Prostate gland (tissue), 2 donors: ENCODE measurements at regions of chr4 and their contacts with region 1.

Region 1: GRCh38 chr4:119628308-119629141 is at the start of gene PDE5A:
- DNase-seq: peak; percentile 82
- H3K4me3 ChIP-seq: peak within 1 kb of the TSS; percentile 60 to 66
- H3K27ac ChIP-seq: peak within 1 kb of the TSS; percentile 85 to 89
- H3K4me1 ChIP-seq: no peaks in the 10 kb centered on the region
- H3K27me3 ChIP-seq: no peaks in the 10 kb centered on the region
- CTCF ChIP-seq: peak; percentile 68 to 94 (median 81)
- POLR2A ChIP-seq: peak; percentile 70
- total RNA-seq, gene PDE5A: 46.0 to 49.6 TPM

Region 2: DNA sequence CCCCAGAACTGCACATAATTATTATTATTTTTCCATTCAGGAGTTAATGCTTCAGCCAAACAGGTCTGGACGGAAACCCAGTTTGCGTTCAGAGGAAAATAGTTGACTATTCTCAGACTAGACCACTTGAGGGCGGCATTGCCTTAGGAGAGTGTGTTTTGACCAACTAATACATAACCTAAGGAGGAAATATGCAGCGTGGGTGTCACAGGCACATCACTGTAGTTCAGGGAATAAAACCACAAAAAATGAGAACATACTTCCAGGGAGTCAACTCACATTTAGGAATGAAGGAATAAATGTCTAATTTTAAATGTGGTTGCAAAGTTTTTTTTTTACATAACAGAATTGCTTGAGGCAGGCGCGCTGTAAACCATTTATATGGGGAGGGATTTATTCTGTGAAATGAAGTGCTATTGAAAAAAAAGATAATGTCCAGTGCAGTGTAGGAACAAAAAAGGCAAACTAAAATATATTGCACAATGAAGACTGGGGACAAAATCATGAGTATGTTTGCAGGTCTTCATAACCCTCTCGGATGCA is 646.6 kb before region 1 on chr4:
- intact Hi-C with region 1: loop called (anchors 10 kb)
- DNase-seq: peak; percentile 65
- H3K4me3 ChIP-seq: no peak overlapping the region
- H3K27ac ChIP-seq: peak overlapping the region; percentile 27 to 39
- H3K4me1 ChIP-seq: no peaks in the 10 kb centered on the region
- H3K27me3 ChIP-seq: no peaks in the 10 kb centered on the region
- CTCF ChIP-seq: peak; percentile 46 to 87 (median 68)
- POLR2A ChIP-seq: no peak

Region 3: GRCh38 chr4:119510395-119511149 is 118.0 kb before region 1 on chr4:
- intact Hi-C with region 1: loop called (anchors 5 kb)
- DNase-seq: no peak
- H3K4me3 ChIP-seq: no peak overlapping the region
- H3K27ac ChIP-seq: peak overlapping the region; percentile 52 to 55
- H3K4me1 ChIP-seq: no peaks in the 10 kb centered on the region
- H3K27me3 ChIP-seq: no peaks in the 10 kb centered on the region
- CTCF ChIP-seq: no peak
- POLR2A ChIP-seq: no peak

Region 4: DNA sequence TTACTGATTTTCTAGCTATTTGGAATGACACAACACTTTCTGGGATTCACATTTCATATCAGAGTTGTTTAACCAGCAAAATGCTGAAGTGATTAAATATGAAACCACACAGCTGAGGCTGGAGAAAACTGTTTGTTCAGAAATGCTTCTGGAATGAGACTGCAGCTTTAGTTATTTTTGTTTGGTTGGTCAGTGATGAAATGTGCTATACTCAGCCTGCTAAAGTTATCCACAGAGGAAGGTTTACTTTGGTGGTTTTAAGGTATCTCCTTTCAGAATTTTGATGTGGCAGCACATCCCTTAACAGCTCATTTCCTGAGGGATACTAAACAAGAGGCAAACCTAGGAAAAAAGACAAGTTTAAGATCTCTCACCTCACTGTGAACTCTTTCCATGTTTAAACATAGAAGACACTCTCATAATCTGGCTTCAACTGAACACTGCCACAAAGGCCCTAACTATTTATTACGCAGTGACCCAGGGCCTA is 106.7 kb after region 1 on chr4:
- intact Hi-C with region 1: loop called (anchors 2 kb)
- DNase-seq: no peak
- H3K4me3 ChIP-seq: no peak overlapping the region
- H3K27ac ChIP-seq: peak overlapping the region; percentile 0 to 3
- H3K4me1 ChIP-seq: no peaks in the 10 kb centered on the region
- H3K27me3 ChIP-seq: peaks cover 3% of the 10 kb centered on the region
- CTCF ChIP-seq: no peak
- POLR2A ChIP-seq: no peak

Region 5: GRCh38 chr4:119861731-119862130 is 233.2 kb after region 1 on chr4:
- intact Hi-C with region 1: loop called (anchors 10 kb)
- DNase-seq: no peak
- H3K4me3 ChIP-seq: no peak overlapping the region
- H3K27ac ChIP-seq: no peak overlapping the region
- H3K4me1 ChIP-seq: no peaks in the 10 kb centered on the region
- H3K27me3 ChIP-seq: no peaks in the 10 kb centered on the region
- CTCF ChIP-seq: no peak
- POLR2A ChIP-seq: no peak

Region 6: GRCh38 chr4:120049732-120050494 is 421.4 kb after region 1 on chr4:
- intact Hi-C with region 1: loop called (anchors 1 kb)
- DNase-seq: peak; percentile 75
- H3K4me3 ChIP-seq: no peak overlapping the region
- H3K27ac ChIP-seq: peak overlapping the region; percentile 10 to 44
- H3K4me1 ChIP-seq: no peaks in the 10 kb centered on the region
- H3K27me3 ChIP-seq: no peaks in the 10 kb centered on the region
- CTCF ChIP-seq: peak; percentile 43 to 81 (median 74)
- POLR2A ChIP-seq: no peak

Region 7: DNA sequence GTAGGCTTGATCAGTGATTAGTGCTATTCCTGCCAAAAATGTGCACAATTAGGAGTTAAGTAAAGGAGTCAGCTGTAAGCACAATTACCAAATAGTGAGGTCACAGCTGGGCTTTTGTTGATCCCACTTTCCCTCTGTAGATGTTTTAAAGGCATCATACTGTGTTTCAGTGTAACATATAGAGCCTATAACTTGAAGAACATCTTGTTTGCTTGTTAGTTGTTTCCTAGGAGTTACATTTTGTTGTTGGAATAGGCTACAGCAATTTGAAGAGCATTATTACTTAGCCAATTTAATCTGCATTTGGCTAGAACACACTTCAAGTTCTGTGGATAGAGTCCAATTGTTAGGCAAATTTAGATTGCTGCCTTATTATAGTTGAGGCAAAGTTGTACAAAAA is 648.9 kb after region 1 on chr4:
- intact Hi-C with region 1: no loop called
- DNase-seq: no peak
- H3K4me3 ChIP-seq: no peak overlapping the region
- H3K27ac ChIP-seq: no peak overlapping the region
- H3K4me1 ChIP-seq: no peaks in the 10 kb centered on the region
- H3K27me3 ChIP-seq: no peaks in the 10 kb centered on the region
- CTCF ChIP-seq: no peak
- POLR2A ChIP-seq: no peak